Right cardiac atrium (tissue), 5 donors: ENCODE measurements at regions of chr4 and their contacts with region 1.

Region 1: DNA sequence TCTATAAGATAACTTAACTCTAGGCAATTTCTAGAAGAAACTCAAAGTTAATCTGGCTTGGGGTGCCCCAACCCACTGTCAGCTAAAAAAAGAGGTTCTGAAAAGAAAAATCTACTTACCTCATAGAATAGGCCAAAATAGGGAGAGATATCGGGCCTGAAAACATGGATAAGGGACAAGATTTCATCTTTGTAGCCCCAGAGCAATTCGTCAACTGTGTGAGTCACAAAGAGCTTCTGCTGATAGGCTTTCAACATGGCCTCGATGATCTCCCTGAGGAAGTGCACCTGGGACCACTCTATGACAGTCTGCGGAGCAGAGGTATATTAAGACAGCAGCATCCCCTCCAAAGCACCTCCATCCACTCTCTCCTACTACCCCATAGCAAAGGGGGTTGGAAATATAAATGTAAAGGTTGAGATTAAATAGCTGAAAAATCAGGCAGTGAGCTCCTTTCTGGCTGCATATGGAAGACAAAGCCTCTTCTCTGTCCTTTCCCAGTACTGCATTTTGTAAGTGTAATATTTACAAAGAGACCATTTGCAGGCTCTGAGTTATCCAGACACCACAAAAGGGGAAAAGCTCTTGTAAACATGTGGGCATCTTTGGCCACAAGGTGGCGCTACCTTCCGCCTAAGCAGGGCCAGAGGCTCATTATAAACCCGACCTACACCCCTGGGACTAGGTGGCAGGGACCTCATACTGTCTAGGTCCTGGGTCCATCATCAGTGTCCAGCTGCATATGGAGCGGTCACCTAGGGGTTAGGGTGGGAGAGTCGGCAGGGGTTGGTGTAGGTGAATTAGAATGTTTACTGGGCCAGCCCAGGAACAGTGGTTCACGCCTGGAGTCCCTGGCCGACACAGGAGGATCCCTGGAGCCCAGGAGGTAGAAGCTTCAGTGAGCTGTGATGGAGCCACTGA is 31.5 kb upstream of the NUP54 start:
- DNase-seq: peak; percentile 89 to 96 (median 93)
- ATAC-seq: peak; percentile 88 to 93
- H3K4me3 ChIP-seq: no peak overlapping the region
- H3K27ac ChIP-seq: no peak overlapping the region
- H3K4me1 ChIP-seq: peaks cover 2% of the 10 kb centered on the region
- H3K27me3 ChIP-seq: no peaks in the 10 kb centered on the region

Region 2: GRCh38 chr4:76246025-76246424 is 66.4 kb after region 1 on chr4:
- intact Hi-C with region 1: loop called in 1 of 4 experiments (anchors 5 kb)
- DNase-seq: no peak
- ATAC-seq: no peak
- H3K4me3 ChIP-seq: no peak overlapping the region
- H3K27ac ChIP-seq: no peak overlapping the region
- H3K4me1 ChIP-seq: no peaks in the 10 kb centered on the region
- H3K27me3 ChIP-seq: no peaks in the 10 kb centered on the region

Region 3: GRCh38 chr4:76305971-76306881 is 126.6 kb after region 1 on chr4 and contains the start of gene STBD1:
- intact Hi-C with region 1: loop called in 1 of 4 experiments (anchors 10 kb)
- DNase-seq: peak; percentile 84 to 92 (median 92)
- ATAC-seq: peak; percentile 91 to 92
- H3K4me3 ChIP-seq: peak within 1 kb of the TSS; percentile 71
- H3K27ac ChIP-seq: peak within 1 kb of the TSS; percentile 72
- H3K4me1 ChIP-seq: peaks cover 9% of the 10 kb centered on the region
- H3K27me3 ChIP-seq: no peaks in the 10 kb centered on the region
- total RNA-seq, gene STBD1: 28.5 to 42.6 (median 31.3) TPM

Region 4: DNA sequence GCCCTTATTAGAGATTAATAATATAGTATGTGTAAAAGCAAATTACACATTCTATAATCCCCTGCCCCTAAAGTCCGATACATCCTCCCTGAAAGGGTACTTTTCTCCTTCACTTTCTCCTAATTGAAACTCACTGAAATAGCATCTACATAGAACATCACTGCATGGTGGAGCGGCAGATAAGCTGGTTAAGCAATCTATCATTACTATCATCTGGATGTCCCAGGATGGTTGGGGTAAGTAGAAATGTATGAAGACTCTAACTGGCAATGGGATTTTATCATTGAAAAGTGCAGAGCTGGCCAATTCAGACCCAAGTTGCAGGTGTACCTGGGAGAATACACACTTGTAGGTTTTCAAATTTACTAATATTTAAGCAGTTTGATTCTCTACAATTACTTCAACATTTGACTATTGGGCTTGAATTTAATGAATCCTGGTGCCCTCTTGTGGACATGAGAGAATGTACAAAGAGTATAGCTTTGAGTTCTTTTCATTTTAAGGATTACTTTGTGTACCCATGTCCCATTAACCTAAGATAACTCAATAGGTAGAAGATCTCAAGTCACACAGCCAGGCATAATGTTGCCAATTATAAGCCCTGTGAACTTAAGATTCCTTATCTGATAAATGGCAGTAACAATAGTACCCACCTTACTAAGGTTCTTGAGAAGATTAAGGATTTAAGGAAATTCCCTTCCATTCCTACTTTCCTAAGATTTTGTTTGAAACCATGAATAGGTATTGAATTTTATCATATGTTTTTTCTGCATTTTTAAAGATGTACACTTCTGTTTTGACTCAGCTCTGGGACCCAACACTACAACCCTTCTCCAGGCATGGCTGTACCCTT is 325.2 kb after region 1 on chr4:
- intact Hi-C with region 1: loop called in 2 of 4 experiments (anchors 10 kb)
- DNase-seq: no peak
- ATAC-seq: no peak
- H3K4me3 ChIP-seq: no peak overlapping the region
- H3K27ac ChIP-seq: no peak overlapping the region
- H3K4me1 ChIP-seq: no peaks in the 10 kb centered on the region
- H3K27me3 ChIP-seq: no peaks in the 10 kb centered on the region